A673 (cell line): ENCODE measurements at regions of chr2 and their contacts with region 1.

Region 1: GRCh38 chr2:61993444-61994024 is 88.1 kb downstream of the COMMD1 start:
- DNase-seq: peak; percentile 46
- H3K4me3 ChIP-seq: no peak overlapping the region
- H3K27ac ChIP-seq: no peak overlapping the region
- H3K4me1 ChIP-seq: no peaks in the 10 kb centered on the region
- H3K27me3 ChIP-seq: no peaks in the 10 kb centered on the region
- CTCF ChIP-seq: peak; percentile 68

Region 2: DNA sequence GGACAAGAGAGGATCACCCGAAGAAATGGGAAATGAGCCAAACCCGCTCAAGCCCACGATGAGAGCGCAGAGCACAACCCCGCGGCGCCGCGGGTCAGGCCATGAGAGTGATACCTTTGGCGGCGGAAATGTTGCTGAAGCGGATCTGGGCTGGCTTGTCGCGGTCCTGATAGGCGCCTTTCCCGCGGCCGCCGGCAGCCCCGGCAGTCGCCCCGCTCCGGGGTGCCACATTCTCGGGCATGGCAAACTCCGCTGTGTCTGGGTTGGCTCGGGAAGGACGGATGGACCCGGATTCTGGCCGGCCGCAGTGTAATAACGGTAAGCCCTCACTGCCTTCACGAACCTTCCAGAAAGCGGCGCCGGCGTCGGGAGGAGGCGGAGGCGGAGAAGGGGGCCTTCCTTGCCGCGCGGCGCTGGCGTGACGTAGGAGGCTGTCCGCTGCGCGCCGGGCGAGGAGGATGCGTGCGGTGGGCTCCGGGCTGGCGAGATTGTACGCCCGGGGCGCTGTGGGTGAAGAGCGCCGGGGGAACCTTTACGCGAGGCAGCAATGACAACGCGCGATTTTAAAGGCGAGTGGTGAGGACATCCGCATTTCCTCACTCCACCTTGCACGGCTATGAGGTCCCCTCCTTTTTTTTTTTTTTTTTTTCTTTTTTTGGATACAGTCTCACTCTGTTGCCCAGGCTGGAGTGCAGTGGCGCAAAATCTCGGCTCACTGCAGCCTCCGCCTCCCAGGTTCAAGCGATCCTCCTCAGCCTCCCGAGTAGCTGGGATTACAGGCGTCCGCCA is 105.1 kb before region 1 on chr2 and contains the start of gene CCT4:
- CTCF ChIA-PET with region 1: no interaction called
- POLR2A ChIA-PET with region 1: interaction called, 15 read pairs
- intact Hi-C with region 1: no loop called
- DNase-seq: peak; percentile 93
- H3K4me3 ChIP-seq: peak within 1 kb of the TSS; percentile 87
- H3K27ac ChIP-seq: peak within 1 kb of the TSS; percentile 90
- H3K4me1 ChIP-seq: peaks cover 9% of the 10 kb centered on the region
- H3K27me3 ChIP-seq: no peaks in the 10 kb centered on the region
- CTCF ChIP-seq: no peak
- total RNA-seq, gene CCT4: 329 and 348 TPM in 2 replicates

Region 3: DNA sequence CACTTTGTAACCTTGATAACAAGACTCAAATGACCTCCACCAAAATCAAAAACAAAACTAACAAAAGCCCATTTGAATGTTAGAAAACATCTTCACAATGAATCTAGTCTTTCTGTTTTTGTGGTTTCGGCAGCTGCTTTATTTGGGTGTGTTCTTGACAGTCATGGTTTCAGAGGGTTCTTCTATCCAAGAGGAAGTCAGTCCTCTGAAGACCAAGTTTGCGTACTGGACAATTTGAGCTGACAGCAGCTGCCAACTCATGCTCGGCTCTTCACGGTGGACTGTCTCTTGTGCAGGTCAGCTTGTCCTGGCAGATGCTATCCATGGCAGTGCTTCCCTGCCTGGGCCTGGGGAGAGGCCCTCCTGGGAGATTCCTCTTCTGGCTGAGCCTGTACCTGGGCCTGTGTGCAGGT is 421.5 kb after region 1 on chr2:
- CTCF ChIA-PET with region 1: interaction called, 4 read pairs
- POLR2A ChIA-PET with region 1: no interaction called
- intact Hi-C with region 1: loop called (anchors 1 kb)
- DNase-seq: no peak
- H3K4me3 ChIP-seq: no peak overlapping the region
- H3K27ac ChIP-seq: no peak overlapping the region
- H3K4me1 ChIP-seq: no peaks in the 10 kb centered on the region
- H3K27me3 ChIP-seq: no peaks in the 10 kb centered on the region
- CTCF ChIP-seq: no peak

Region 4: DNA sequence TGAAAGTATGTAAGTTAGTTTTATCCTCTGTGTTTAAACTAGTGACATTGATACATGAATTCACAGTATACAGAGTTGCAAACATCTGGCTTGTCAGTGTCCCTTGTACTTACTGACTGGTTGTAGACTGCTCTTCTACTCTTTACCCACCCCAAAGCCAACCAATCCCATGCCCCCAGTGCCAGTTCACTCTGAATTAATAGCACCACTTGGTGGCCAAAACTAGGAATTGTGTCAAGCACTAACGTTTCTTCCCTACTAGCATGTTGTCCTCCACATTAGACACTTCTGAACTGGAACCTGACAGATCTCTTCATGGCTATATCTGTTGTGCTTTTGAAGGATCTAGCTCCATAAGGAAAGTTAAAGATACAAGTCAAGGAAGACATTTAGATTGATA is 1029.9 kb after region 1 on chr2:
- CTCF ChIA-PET with region 1: interaction called, 10 read pairs
- POLR2A ChIA-PET with region 1: no interaction called
- intact Hi-C with region 1: no loop called
- DNase-seq: peak; percentile 84
- H3K4me3 ChIP-seq: no peak overlapping the region
- H3K27ac ChIP-seq: no peak overlapping the region
- H3K4me1 ChIP-seq: no peaks in the 10 kb centered on the region
- H3K27me3 ChIP-seq: no peaks in the 10 kb centered on the region
- CTCF ChIP-seq: peak; percentile 75